CD8-positive, alpha-beta memory T cell (primary cell): ENCODE measurements at regions of chr16 and their contacts with region 1.

Region 1: GRCh38 chr16:23570992-23571632 is 13.6 kb downstream of the UBFD1 start:
- DNase-seq: peak in 1 of 5 donors; percentile 29
- H3K4me3 ChIP-seq: no peak overlapping the region
- H3K4me3 Mint-ChIP-seq: no peak overlapping the region
- H3K27ac ChIP-seq: no peak overlapping the region
- H3K27ac Mint-ChIP-seq: peak overlapping the region in 1 of 8 donors; percentile 9
- H3K4me1 ChIP-seq: no peaks in the 10 kb centered on the region
- H3K4me1 Mint-ChIP-seq: peaks cover 0 to 4% (median 0%) of the 10 kb centered on the region in 3 donors
- H3K27me3 ChIP-seq: no peaks in the 10 kb centered on the region
- H3K27me3 Mint-ChIP-seq: no peaks in the 10 kb centered on the region

Region 2: DNA sequence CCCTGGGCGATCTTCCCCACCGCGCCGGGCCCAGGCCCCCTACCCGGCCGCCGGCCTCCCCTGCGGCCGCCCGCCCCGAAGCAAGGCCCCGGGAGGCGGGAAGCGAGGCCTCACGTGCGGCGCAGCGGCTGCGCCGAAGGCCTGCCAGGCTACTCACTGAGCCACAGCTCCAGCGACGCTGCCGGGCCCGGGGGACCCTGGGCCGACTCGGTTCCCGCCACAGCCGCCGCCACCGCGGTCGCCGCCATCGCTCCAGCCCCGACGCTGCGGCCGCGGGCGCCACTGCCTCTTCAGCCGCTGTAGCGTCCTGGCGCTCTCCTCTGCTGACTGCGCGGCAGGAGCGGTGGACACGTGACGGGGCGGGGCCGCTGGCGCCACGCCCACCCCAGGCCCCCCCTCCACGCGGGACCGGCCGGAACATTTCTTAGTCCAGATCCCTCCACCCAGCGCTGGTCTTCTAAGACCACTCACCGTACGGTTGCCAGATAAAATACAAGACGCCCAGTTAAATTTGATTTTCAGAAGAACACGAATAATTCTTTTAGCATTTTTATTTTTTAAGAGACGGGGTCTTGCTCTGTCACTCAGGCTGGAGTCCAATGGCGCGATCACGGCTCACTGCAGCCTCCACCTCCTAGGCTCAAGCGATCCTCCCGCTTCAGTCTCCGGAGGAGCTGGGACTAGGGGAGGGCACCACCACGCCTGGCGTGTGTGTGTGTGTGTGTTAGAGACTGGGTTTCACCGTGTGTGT is 60.8 kb before region 1 on chr16 and contains the start of gene GGA2:
- CTCF ChIA-PET with region 1: no interaction called
- POLR2A ChIA-PET with region 1: interaction called, 13 read pairs
- DNase-seq: peak; percentile 70 to 85 (median 74)
- H3K4me3 ChIP-seq: peak within 1 kb of the TSS; percentile 58
- H3K4me3 Mint-ChIP-seq: peak within 1 kb of the TSS; percentile 88 to 96 (median 91)
- H3K27ac ChIP-seq: peak within 1 kb of the TSS; percentile 66
- H3K27ac Mint-ChIP-seq: peak within 1 kb of the TSS; percentile 84 to 93 (median 90)
- H3K4me1 ChIP-seq: peaks cover 52% of the 10 kb centered on the region
- H3K4me1 Mint-ChIP-seq: peaks cover 54 to 75% (median 71%) of the 10 kb centered on the region in 3 donors
- H3K27me3 ChIP-seq: no peaks in the 10 kb centered on the region
- H3K27me3 Mint-ChIP-seq: peaks cover 0 to 5% of the 10 kb centered on the region in 2 donors
- total RNA-seq, gene GGA2: 63.5 to 70.1 TPM